ENCODE measurements at regions of chr22 and their contacts with region 1.

Region 1: DNA sequence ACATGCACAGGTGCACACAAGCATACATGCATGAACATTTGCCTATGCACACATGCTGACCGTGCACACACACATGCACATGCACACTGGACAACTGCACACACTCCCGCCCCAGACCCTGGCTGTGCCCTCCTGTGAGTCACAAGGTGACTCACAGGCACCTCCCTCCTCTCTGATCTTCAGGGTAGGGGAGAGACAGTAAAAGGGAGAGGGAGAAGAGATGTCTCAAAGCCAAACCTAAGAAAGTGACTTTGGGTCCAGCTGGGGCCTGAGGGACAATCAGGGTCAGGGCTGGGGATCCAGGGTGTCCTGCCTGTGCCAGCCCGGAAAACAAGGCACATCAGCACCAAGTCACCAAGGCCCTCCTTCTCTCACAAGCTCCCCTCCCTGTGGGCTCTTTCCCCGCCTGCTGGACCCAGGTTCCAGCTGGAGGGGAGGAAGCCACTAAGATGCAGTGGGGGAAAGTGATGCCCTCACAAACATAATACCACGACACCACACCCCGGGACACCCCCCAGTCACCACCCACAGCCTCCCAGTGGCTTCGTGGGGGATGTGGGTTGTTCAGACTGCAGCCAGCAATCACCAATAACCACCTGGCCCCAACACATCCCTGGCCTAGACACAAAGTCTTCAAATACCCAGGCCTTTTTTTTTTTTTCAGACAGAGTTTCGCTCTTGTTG is 39.3 kb downstream of the PDGFB start:
- DNase-seq: no peak
- H3K4me3 ChIP-seq: no peak overlapping the region
- H3K27ac ChIP-seq: no peak overlapping the region
- H3K4me1 ChIP-seq: peaks cover 0 to 9% (median 4%) of the 10 kb centered on the region in 4 experiments; a peak in 5 of 7 replicates
- H3K27me3 ChIP-seq: no peaks in the 10 kb centered on the region
- CTCF ChIP-seq: no peak
- EP300 ChIP-seq: no peak
- POLR2A ChIP-seq: no peak
- RAD21 ChIP-seq: no peak

Region 2: DNA sequence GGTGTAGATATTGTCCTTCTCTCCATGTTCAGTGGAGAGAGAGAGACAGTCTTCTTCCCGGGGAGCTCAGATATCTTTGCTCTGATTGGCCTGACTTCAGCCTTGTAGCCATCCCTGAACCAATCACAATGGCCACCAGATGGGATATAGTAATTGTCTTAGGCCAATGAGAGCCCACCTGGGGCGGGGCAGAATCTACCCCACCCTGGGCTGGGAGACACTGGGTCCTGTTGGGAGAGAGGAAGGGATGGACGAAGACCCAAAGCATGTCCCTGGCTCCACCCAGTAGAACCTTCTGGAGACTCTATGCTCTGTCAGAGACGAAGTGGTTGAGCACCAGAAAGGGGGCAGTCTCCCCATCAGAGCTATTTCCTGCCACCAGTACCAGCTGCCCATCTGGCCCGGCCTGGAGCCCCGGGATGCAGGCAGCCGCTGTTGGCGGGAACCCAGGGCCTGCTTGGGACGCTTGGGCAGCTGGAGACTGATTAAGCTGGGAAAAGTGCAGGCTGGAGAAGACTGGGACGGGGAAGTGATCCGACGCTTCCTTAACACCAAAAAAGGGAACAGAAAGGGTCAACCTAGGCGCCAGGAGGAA is 21.4 kb before region 1 on chr22:
- CTCF ChIA-PET with region 1: interaction called, 8 read pairs
- POLR2A ChIA-PET with region 1: interaction called, 14 read pairs
- DNase-seq: no peak
- H3K4me3 ChIP-seq: no peak overlapping the region
- H3K27ac ChIP-seq: no peak overlapping the region
- H3K4me1 ChIP-seq: peaks cover 0 to 18% (median 7%) of the 10 kb centered on the region in 4 experiments; a peak in 6 of 7 replicates
- H3K27me3 ChIP-seq: no peaks in the 10 kb centered on the region
- CTCF ChIP-seq: no peak
- EP300 ChIP-seq: no peak
- POLR2A ChIP-seq: no peak; a peak in 1 of 3 replicates
- RAD21 ChIP-seq: no peak

Region 3: GRCh38 chr22:39230261-39231196 is 25.0 kb after region 1 on chr22:
- CTCF ChIA-PET with region 1: interaction called, 5 read pairs
- POLR2A ChIA-PET with region 1: interaction called, 22 read pairs
- DNase-seq: peak in 1 of 2 experiments; percentile 81
- H3K4me3 ChIP-seq: peak overlapping the region in 1 of 4 experiments; percentile 27; a peak in 3 of 8 replicates
- H3K27ac ChIP-seq: no peak overlapping the region
- H3K4me1 ChIP-seq: peaks cover 4 to 42% (median 31%) of the 10 kb centered on the region in 4 experiments
- H3K27me3 ChIP-seq: peaks cover 0 to 19% (median 6%) of the 10 kb centered on the region in 4 experiments; a peak in 5 of 7 replicates
- CTCF ChIP-seq: peak; percentile 0 to 40 (median 20); a peak in 2 of 4 replicates
- EP300 ChIP-seq: no peak
- POLR2A ChIP-seq: no peak
- RAD21 ChIP-seq: no peak; a peak in 1 of 4 replicates